ENCODE measurements at regions of chr21 and their contacts with region 1.

Region 1: DNA sequence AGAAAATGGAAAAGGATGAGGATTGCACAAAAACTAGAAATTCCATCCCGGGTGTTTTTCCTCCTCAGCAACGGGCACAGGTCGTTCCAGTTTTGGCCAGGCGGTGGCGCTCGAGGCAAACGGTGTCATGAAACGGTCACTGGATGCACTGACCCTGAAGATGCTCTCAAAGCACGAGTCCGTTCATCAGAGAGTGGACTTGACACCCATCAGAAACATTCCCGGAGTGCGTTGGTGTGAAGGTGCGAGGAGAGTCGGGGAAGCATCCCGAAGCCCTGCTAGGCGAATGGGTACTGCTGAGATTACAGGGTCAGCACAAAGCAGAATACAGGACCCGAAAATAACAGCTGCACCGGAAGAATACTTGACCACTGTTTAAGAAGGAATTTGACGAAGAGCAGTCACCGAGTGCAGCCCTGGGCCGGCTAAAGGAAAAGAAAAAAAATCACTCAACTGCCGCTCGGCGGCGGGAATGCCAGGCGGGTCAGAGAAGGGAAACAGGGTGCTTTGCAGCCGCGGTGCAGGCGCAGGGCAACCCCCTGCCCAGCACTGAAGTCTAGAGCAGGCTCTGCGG is 71.7 kb upstream of the ETS2 start:
- DNase-seq: peak; percentile 12
- ATAC-seq: peak; percentile 91
- H3K4me3 ChIP-seq: peak overlapping the region; percentile 49
- H3K27ac ChIP-seq: no peak overlapping the region
- H3K4me1 ChIP-seq: no peaks in the 10 kb centered on the region
- H3K27me3 ChIP-seq: no peaks in the 10 kb centered on the region; a peak in 1 of 4 replicates
- CTCF ChIP-seq: peak; percentile 90 to 94 (median 94); a peak in 5 of 6 replicates
- EP300 ChIP-seq: no peak
- POLR2A ChIP-seq: no peak
- RAD21 ChIP-seq: peak; percentile 93

Region 2: DNA sequence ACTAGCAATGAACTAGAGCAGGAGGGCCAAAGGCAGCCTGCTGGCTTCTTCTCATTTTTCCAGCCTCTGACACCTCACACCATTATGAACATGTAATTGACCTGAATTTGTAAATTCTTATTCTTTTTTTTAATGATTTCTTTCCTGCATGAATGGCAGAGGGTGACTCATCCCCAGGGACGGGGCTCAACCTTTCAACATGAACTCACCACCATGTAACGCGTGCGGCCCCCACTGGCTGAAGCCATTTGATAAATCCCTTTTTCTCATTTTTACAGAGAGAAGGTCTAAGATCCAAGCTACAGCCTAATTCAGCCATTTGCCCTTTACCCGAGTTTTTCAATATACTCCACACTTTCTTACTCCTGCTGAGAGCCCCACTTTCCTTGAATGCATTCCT is 62.4 kb after region 1 on chr21:
- CTCF ChIA-PET with region 1: interaction called, 6 read pairs
- POLR2A ChIA-PET with region 1: no interaction called
- RAD21 ChIA-PET with region 1: no interaction called
- SMC1A ChIA-PET with region 1: interaction called, 3 read pairs
- in situ Hi-C with region 1: no loop called
- intact Hi-C with region 1: loop called (anchors 1 kb)
- DNase-seq: no peak
- ATAC-seq: no peak
- H3K4me3 ChIP-seq: no peak overlapping the region
- H3K27ac ChIP-seq: no peak overlapping the region
- H3K4me1 ChIP-seq: peaks cover 3% of the 10 kb centered on the region; the same call in 1 of the 2 replicates
- H3K27me3 ChIP-seq: no peaks in the 10 kb centered on the region; a peak in 1 of 4 replicates
- CTCF ChIP-seq: peak; percentile 2 to 26 (median 11); a peak in 2 of 6 replicates
- EP300 ChIP-seq: no peak
- POLR2A ChIP-seq: no peak
- RAD21 ChIP-seq: peak; percentile 35

Region 3: DNA sequence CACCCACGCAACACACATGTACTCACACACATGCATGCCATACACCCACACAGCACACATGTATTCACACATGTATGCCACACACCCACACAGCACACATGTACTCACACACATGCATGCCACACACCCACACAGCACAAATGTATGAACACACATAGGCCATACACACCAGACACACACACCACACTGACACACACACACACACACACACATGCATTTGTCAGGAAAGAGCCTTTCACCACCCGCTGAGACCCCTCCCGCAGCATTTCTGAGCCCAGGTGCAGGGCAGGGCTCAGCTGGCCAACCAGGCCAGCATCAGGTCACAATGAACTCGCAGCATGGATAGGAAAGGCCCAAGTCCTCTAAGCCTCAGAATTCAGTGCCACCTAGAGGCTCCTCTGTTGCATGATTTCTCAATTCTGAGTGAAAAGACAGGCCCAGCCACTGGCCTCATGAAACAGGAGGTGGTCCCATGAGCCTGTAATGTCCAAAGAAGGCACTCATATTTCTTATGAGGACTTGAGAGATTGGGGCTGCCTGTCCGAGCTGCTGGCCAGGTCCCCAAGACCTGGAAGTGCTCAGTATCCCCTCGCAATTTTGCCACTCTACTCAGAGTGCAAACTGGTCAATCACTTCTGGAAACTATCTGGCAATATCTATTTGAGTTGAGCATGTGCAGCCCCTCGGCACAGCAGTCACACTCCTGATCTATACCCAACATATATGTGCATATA is 391.9 kb after region 1 on chr21:
- CTCF ChIA-PET with region 1: interaction called, 5 read pairs
- POLR2A ChIA-PET with region 1: no interaction called
- RAD21 ChIA-PET with region 1: no interaction called
- SMC1A ChIA-PET with region 1: interaction called, 11 read pairs
- in situ Hi-C with region 1: loop called (anchors 10 kb)
- intact Hi-C with region 1: loop called (anchors 1 kb)
- DNase-seq: no peak
- ATAC-seq: peak; percentile 81
- H3K4me3 ChIP-seq: no peak overlapping the region
- H3K27ac ChIP-seq: no peak overlapping the region
- H3K4me1 ChIP-seq: no peaks in the 10 kb centered on the region
- H3K27me3 ChIP-seq: no peaks in the 10 kb centered on the region
- CTCF ChIP-seq: peak; percentile 44 to 56 (median 53); a peak in 5 of 6 replicates
- EP300 ChIP-seq: no peak
- POLR2A ChIP-seq: no peak
- RAD21 ChIP-seq: peak; percentile 58

Measured in GM12878 (cell line).